CD8-positive, alpha-beta T cell (primary cell): ENCODE measurements at regions of chr7 and their contacts with region 1.

Region 1: GRCh38 chr7:123635551-123636359 is 19.9 kb upstream of the LMOD2 start:
- DNase-seq: peak in 2 of 9 experiments; percentile 13 to 26
- ATAC-seq: no peak
- H3K4me3 ChIP-seq: no peak overlapping the region
- H3K4me3 Mint-ChIP-seq: no peak overlapping the region
- H3K27ac ChIP-seq: no peak overlapping the region
- H3K27ac Mint-ChIP-seq: no peak overlapping the region
- H3K4me1 ChIP-seq: no peaks in the 10 kb centered on the region
- H3K4me1 Mint-ChIP-seq: no peaks in the 10 kb centered on the region
- H3K27me3 ChIP-seq: no peaks in the 10 kb centered on the region
- H3K27me3 Mint-ChIP-seq: peaks cover 37% of the 10 kb centered on the region
- CTCF ChIP-seq: no peak

Region 2: GRCh38 chr7:123624527-123625183 is 11.1 kb before region 1 on chr7:
- CTCF ChIA-PET with region 1: interaction called, 12 read pairs
- POLR2A ChIA-PET with region 1: no interaction called
- intact Hi-C with region 1: no loop called
- DNase-seq: peak; percentile 26 to 68 (median 57)
- ATAC-seq: peak; percentile 52
- H3K4me3 ChIP-seq: no peak overlapping the region
- H3K4me3 Mint-ChIP-seq: no peak overlapping the region
- H3K27ac ChIP-seq: no peak overlapping the region
- H3K27ac Mint-ChIP-seq: no peak overlapping the region
- H3K4me1 ChIP-seq: no peaks in the 10 kb centered on the region
- H3K4me1 Mint-ChIP-seq: peaks cover 2% of the 10 kb centered on the region
- H3K27me3 ChIP-seq: no peaks in the 10 kb centered on the region
- H3K27me3 Mint-ChIP-seq: peaks cover 2% of the 10 kb centered on the region
- CTCF ChIP-seq: peak; percentile 63